GM12878 (cell line): ENCODE measurements at regions of chr6 and their contacts with region 1.

Region 1: GRCh38 chr6:11653028-11653583 is 115.6 kb downstream of the TMEM170B start:
- DNase-seq: no peak
- ATAC-seq: peak; percentile 80
- H3K4me3 ChIP-seq: no peak overlapping the region
- H3K27ac ChIP-seq: no peak overlapping the region
- H3K4me1 ChIP-seq: peaks cover 17% of the 10 kb centered on the region
- H3K27me3 ChIP-seq: no peaks in the 10 kb centered on the region
- CTCF ChIP-seq: no peak
- EP300 ChIP-seq: no peak
- POLR2A ChIP-seq: no peak
- RAD21 ChIP-seq: no peak

Region 2: DNA sequence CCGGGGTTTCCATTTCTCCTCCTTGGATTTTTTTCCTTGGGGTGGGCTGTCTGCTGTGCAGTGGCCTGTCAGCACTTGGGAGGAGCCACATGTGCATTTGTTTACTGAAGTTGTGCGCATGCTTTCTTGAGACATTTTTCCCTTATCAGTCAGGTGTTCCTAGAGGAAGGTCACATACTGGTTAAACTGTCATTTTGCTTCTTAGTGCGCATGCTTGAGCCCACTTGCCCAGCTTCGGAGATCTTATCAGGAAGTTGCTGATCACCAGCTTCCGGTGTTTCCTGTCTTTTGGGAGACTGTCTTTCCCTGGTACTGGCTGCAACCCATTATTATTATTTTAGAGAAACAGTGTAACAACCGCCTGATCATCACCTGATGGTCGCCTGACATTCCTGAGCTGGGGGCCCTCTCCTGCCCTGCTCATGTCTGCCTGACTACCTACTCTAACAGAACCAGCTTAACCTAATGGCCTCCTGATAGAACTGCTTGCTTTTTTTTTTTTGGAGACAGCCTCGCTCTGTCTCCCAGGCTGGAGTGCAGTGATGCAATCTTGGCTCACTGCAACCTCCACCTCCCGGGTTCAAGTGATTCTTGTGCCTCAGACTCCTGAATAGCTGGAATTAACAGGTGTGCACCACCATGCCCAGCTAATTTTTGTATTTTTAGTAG is 541.2 kb before region 1 on chr6:
- CTCF ChIA-PET with region 1: no interaction called
- POLR2A ChIA-PET with region 1: no interaction called
- RAD21 ChIA-PET with region 1: no interaction called
- SMC1A ChIA-PET with region 1: no interaction called
- in situ Hi-C with region 1: no loop called
- intact Hi-C with region 1: no loop called
- DNase-seq: no peak
- ATAC-seq: no peak
- H3K4me3 ChIP-seq: no peak overlapping the region
- H3K27ac ChIP-seq: no peak overlapping the region
- H3K4me1 ChIP-seq: no peaks in the 10 kb centered on the region
- H3K27me3 ChIP-seq: no peaks in the 10 kb centered on the region
- CTCF ChIP-seq: no peak
- EP300 ChIP-seq: no peak
- POLR2A ChIP-seq: no peak
- RAD21 ChIP-seq: no peak

Region 3: GRCh38 chr6:11522817-11523605 is 130.1 kb before region 1 on chr6:
- CTCF ChIA-PET with region 1: no interaction called
- POLR2A ChIA-PET with region 1: no interaction called
- RAD21 ChIA-PET with region 1: no interaction called
- SMC1A ChIA-PET with region 1: no interaction called
- in situ Hi-C with region 1: no loop called
- intact Hi-C with region 1: no loop called
- DNase-seq: no peak
- ATAC-seq: no peak
- H3K4me3 ChIP-seq: no peak overlapping the region
- H3K27ac ChIP-seq: no peak overlapping the region
- H3K4me1 ChIP-seq: peaks cover 5% of the 10 kb centered on the region; the same call in 1 of the 2 replicates
- H3K27me3 ChIP-seq: no peaks in the 10 kb centered on the region
- CTCF ChIP-seq: no peak
- EP300 ChIP-seq: no peak
- POLR2A ChIP-seq: no peak
- RAD21 ChIP-seq: no peak

Region 4: DNA sequence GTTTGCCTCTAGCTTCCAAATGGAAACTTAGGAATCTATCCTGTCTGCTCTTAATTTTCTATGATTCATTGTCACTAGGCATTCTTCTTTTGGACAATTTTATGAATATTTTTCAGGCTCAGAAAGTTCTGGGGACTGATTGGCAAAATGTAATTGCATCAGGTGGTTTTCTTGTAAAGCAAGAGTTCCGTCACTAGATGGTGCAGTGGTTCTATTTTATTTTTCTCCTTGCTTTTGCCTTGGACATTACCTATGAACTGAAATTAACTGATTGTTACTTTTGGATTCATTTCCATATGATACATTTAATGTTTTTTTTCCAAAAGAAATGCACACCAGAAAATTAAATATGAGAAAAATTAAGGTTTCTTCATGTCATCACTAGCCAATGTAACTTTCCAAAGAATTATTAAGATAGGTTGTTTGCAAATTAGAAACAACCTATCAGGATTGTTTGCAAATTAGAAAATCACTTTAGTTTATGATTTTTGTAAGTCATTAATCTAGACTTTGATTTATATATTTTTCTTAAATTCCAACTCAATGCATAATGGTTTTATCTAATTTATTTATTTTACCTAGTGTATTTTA is 67.6 kb before region 1 on chr6:
- CTCF ChIA-PET with region 1: interaction called, 16 read pairs
- POLR2A ChIA-PET with region 1: no interaction called
- RAD21 ChIA-PET with region 1: interaction called, 18 read pairs
- SMC1A ChIA-PET with region 1: interaction called, 29 read pairs
- in situ Hi-C with region 1: no loop called
- intact Hi-C with region 1: no loop called
- DNase-seq: peak; percentile 32
- ATAC-seq: peak; percentile 70
- H3K4me3 ChIP-seq: no peak overlapping the region
- H3K27ac ChIP-seq: no peak overlapping the region
- H3K4me1 ChIP-seq: no peaks in the 10 kb centered on the region
- H3K27me3 ChIP-seq: no peaks in the 10 kb centered on the region
- CTCF ChIP-seq: peak; percentile 45 to 67 (median 59); a peak in 5 of 6 replicates
- EP300 ChIP-seq: no peak
- POLR2A ChIP-seq: no peak
- RAD21 ChIP-seq: peak; percentile 77

Region 5: GRCh38 chr6:11665604-11666326 is 12.7 kb after region 1 on chr6:
- CTCF ChIA-PET with region 1: interaction called, 34 read pairs
- POLR2A ChIA-PET with region 1: no interaction called
- RAD21 ChIA-PET with region 1: interaction called, 14 read pairs
- SMC1A ChIA-PET with region 1: interaction called, 42 read pairs
- in situ Hi-C with region 1: no loop called
- intact Hi-C with region 1: no loop called
- DNase-seq: no peak
- ATAC-seq: peak; percentile 74
- H3K4me3 ChIP-seq: no peak overlapping the region
- H3K27ac ChIP-seq: no peak overlapping the region
- H3K4me1 ChIP-seq: no peaks in the 10 kb centered on the region
- H3K27me3 ChIP-seq: no peaks in the 10 kb centered on the region
- CTCF ChIP-seq: no peak
- EP300 ChIP-seq: no peak
- POLR2A ChIP-seq: no peak
- RAD21 ChIP-seq: no peak

Region 6: DNA sequence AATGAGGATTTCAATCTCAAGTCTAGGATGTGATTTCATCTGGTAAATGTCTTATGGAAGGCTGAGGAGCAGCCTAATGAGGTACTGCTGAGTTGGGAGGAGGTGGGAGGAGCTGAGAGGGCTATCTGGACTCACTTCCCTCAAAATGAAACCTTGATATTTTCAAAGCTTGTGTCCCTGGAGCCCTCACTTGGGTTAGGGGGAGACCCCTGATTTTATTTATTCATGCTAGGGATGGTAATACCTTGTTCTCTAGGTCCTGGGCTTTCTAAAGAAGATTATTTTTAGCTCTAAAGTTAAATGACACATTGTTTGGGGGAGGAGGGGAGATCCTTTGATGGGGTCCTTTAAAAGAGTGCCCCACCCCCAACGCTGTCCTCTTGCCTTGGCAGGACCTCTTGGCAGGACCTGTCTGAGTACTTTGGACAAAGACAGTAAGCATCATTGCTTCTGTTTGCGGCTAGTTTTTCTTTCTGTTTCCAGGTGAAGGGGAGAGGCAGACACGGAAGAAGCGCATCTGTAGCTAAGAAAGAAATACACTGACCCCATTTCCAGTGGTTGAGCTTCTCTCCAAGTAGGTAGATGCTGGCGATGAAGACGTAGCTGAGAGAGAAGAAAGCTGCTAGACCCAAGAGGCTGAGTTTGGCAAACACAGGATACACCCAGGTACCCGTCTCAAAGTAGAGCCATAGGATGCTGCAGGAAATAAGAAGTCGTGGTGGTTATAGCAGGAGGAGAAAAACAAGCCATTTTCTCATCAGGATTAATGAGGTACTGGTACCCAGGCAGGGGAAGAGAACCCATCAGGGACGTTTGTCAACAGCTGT is 69.9 kb after region 1 on chr6:
- CTCF ChIA-PET with region 1: interaction called, 13 read pairs
- POLR2A ChIA-PET with region 1: no interaction called
- RAD21 ChIA-PET with region 1: interaction called, 6 read pairs
- SMC1A ChIA-PET with region 1: interaction called, 8 read pairs
- in situ Hi-C with region 1: no loop called
- intact Hi-C with region 1: no loop called
- DNase-seq: no peak
- ATAC-seq: peak; percentile 78
- H3K4me3 ChIP-seq: peak overlapping the region; percentile 63
- H3K27ac ChIP-seq: peak overlapping the region; percentile 88
- H3K4me1 ChIP-seq: peaks cover 8% of the 10 kb centered on the region
- H3K27me3 ChIP-seq: no peaks in the 10 kb centered on the region
- CTCF ChIP-seq: no peak
- EP300 ChIP-seq: no peak
- POLR2A ChIP-seq: no peak; the same call in 1 of the 2 replicates
- RAD21 ChIP-seq: 0 out of 2 replicates have a peak, but pooled peaks have one; percentile 4

Region 7: DNA sequence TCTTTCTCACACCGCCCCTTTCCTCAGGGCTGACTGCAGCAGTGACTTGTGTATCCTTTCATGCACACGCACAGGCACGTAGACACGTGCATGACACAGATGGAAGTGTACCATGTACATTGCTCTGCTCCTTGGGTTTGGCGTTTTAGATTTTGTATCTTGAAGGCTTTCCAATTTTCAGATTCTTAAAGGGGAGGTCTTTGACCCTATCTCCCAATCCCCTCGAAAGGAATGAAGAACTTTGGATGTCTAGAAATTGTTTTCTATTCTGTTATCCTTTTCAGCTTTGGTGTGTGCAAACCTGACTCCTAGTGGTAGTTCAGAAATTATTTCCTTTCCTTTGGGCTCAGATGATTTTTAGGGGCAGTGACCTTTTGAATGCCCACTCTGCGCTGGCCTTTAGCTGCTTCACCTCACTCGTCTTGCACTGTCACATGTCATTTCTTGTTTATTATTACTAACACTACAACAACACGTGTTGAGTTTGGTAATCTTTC is 422.0 kb after region 1 on chr6:
- CTCF ChIA-PET with region 1: interaction called, 16 read pairs
- POLR2A ChIA-PET with region 1: no interaction called
- RAD21 ChIA-PET with region 1: interaction called, 11 read pairs
- SMC1A ChIA-PET with region 1: interaction called, 26 read pairs
- in situ Hi-C with region 1: no loop called
- intact Hi-C with region 1: loop called (anchors 2 kb)
- DNase-seq: no peak
- ATAC-seq: peak; percentile 63
- H3K4me3 ChIP-seq: no peak overlapping the region
- H3K27ac ChIP-seq: no peak overlapping the region
- H3K4me1 ChIP-seq: peaks cover 3% of the 10 kb centered on the region
- H3K27me3 ChIP-seq: no peaks in the 10 kb centered on the region
- CTCF ChIP-seq: peak; percentile 30 to 53 (median 40); a peak in 4 of 6 replicates
- EP300 ChIP-seq: no peak
- POLR2A ChIP-seq: no peak
- RAD21 ChIP-seq: peak; percentile 65

Region 8: DNA sequence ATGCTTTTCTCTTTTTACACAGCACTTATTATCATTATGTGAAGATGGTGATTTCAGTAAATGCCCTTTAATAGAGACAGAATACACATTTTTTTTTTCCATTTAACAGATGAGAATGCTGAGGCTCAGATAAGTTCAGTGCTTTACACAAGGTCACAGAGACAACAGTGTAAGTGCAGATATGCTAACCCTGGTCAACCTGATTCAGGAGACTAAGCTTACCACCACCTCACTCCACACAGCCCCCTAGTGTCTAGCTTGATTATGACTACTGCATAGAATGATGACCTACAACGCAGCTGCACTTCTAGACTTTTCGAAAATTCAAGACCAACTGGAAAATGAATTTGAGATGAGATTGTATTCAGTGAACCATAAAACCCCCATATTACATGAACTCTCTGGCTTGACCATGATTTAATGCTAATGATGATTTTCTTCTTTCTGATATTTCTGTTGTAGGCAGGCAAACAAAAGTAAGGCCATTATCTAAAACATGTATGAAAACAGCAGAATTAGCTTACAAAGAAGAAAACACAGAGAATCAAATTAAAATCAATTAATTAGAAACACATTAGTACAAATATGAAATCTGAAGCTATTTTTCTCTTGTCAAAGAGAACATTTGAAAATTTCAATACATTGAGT is 851.3 kb after region 1 on chr6:
- CTCF ChIA-PET with region 1: interaction called, 17 read pairs
- POLR2A ChIA-PET with region 1: no interaction called
- RAD21 ChIA-PET with region 1: interaction called, 10 read pairs
- SMC1A ChIA-PET with region 1: interaction called, 5 read pairs
- in situ Hi-C with region 1: no loop called
- intact Hi-C with region 1: loop called (anchors 5 kb)
- DNase-seq: peak; percentile 32
- ATAC-seq: peak; percentile 99
- H3K4me3 ChIP-seq: no peak overlapping the region
- H3K27ac ChIP-seq: no peak overlapping the region
- H3K4me1 ChIP-seq: no peaks in the 10 kb centered on the region
- H3K27me3 ChIP-seq: no peaks in the 10 kb centered on the region
- CTCF ChIP-seq: peak; percentile 58 to 76 (median 68)
- EP300 ChIP-seq: no peak
- POLR2A ChIP-seq: no peak
- RAD21 ChIP-seq: peak; percentile 65